Activated CD4-positive, alpha-beta T cell treated with anti-CD3 and anti-CD28 coated beads, Interleukin-2, amount 10 ng/mL, durations not matched to agents 24 days and 14 days (primary cell): ENCODE measurements at regions of chr2 and their contacts with region 1.

Region 1: GRCh38 chr2:183919926-183920325 is 678.4 kb upstream of the ZNF804A start:
- DNase-seq: no peak
- H3K4me3 Mint-ChIP-seq: no peak overlapping the region
- H3K27ac Mint-ChIP-seq: no peak overlapping the region
- H3K4me1 Mint-ChIP-seq: no peaks in the 10 kb centered on the region
- H3K27me3 Mint-ChIP-seq: no peaks in the 10 kb centered on the region

Region 2: GRCh38 chr2:183935005-183935404 is 15.1 kb after region 1 on chr2:
- intact Hi-C with region 1: no loop called
- DNase-seq: no peak
- H3K4me3 Mint-ChIP-seq: no peak overlapping the region
- H3K27ac Mint-ChIP-seq: no peak overlapping the region
- H3K4me1 Mint-ChIP-seq: no peaks in the 10 kb centered on the region
- H3K27me3 Mint-ChIP-seq: no peaks in the 10 kb centered on the region

Region 3: GRCh38 chr2:183967756-183968155 is 47.8 kb after region 1 on chr2:
- intact Hi-C with region 1: loop called (anchors 2 kb)
- DNase-seq: no peak
- H3K4me3 Mint-ChIP-seq: no peak overlapping the region
- H3K27ac Mint-ChIP-seq: no peak overlapping the region
- H3K4me1 Mint-ChIP-seq: no peaks in the 10 kb centered on the region
- H3K27me3 Mint-ChIP-seq: no peaks in the 10 kb centered on the region

Region 4: GRCh38 chr2:185274718-185275484 is 1355.0 kb after region 1 on chr2:
- intact Hi-C with region 1: no loop called
- DNase-seq: no peak
- H3K4me3 Mint-ChIP-seq: no peak overlapping the region
- H3K27ac Mint-ChIP-seq: no peak overlapping the region
- H3K4me1 Mint-ChIP-seq: no peaks in the 10 kb centered on the region
- H3K27me3 Mint-ChIP-seq: no peaks in the 10 kb centered on the region